Activated CD4-positive, alpha-beta T cell treated with anti-CD3 and anti-CD28 coated beads, Interleukin-2, amount 10 ng/mL, durations not matched to agents 24 days and 14 days (primary cell): ENCODE measurements at regions of chr1 and their contacts with region 1.

Region 1: DNA sequence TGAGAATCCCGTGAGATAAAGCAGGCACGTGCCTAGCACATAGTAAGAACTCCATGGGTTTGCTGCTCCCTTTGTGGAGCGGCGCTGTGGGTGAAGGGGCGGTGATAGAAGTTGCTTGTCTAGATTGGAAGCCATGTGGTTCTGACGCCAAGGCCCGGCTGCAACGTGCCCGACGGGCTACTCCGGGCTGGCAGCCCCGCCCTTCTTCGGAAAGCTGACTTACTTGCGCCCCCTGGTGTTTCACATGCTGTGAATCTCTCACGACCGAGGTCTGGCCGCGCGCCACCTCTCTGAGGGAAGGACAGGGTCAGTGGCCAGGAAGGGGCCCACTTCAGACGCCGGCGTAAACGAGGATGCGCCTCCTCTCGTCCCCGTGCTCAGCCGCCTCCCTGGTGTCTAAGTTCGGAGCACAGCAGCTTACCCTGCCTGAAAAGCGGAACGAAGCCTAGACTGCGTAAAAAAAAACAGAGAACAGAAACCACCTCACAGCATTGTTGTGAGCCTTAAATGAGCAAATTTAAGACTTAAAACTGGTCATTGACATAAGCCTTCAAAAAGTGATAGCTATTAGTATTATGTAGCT is 42.6 kb upstream of the WNT2B start:
- DNase-seq: peak; percentile 96
- H3K4me3 Mint-ChIP-seq: peak overlapping the region; percentile 85
- H3K27ac Mint-ChIP-seq: peak overlapping the region; percentile 68
- H3K4me1 Mint-ChIP-seq: peaks cover 16% of the 10 kb centered on the region
- H3K27me3 Mint-ChIP-seq: peaks cover 30% of the 10 kb centered on the region

Region 2: GRCh38 chr1:112395821-112396652 is 70.1 kb before region 1 on chr1 and contains the start of gene CTTNBP2NL:
- intact Hi-C with region 1: loop called (anchors 1 kb)
- DNase-seq: peak; percentile 95
- H3K4me3 Mint-ChIP-seq: peak within 1 kb of the TSS; percentile 89
- H3K27ac Mint-ChIP-seq: peak within 1 kb of the TSS; percentile 78
- H3K4me1 Mint-ChIP-seq: peaks cover 31% of the 10 kb centered on the region
- H3K27me3 Mint-ChIP-seq: peaks cover 10% of the 10 kb centered on the region
- total RNA-seq, gene CTTNBP2NL: 3.9 and 4.1 TPM in 2 replicates

Region 3: GRCh38 chr1:112544011-112544688 is 78.0 kb after region 1 on chr1:
- intact Hi-C with region 1: no loop called
- DNase-seq: no peak
- H3K4me3 Mint-ChIP-seq: no peak overlapping the region
- H3K27ac Mint-ChIP-seq: no peak overlapping the region
- H3K4me1 Mint-ChIP-seq: no peaks in the 10 kb centered on the region
- H3K27me3 Mint-ChIP-seq: no peaks in the 10 kb centered on the region